CD4-positive, alpha-beta memory T cell (primary cell): ENCODE measurements at regions of chr11 and their contacts with region 1.

Region 1: DNA sequence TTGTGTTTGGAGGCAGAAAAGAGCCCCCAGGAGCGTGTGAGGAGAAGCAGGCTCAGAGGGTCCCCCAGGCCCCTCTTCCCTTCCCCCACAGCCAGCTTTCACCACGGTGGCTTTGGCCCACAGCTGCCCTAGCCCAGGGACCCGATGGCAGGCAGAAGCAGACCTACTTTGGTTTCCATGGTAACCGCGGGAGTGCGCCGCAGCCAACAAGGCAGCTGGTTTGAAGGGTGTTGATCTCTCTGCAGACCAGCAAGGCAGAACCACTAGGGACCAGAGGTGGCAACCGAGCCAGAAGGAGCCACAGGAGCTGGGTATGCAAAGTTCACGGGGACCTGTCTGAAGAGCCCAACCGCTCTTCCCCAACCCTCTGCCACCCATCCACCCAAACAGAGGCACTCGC is 69.4 kb downstream of the BUD13 start:
- DNase-seq: peak in 1 of 5 donors; percentile 7
- H3K4me3 ChIP-seq: no peak overlapping the region
- H3K4me3 Mint-ChIP-seq: no peak overlapping the region
- H3K27ac ChIP-seq: no peak overlapping the region
- H3K27ac Mint-ChIP-seq: no peak overlapping the region
- H3K4me1 ChIP-seq: no peaks in the 10 kb centered on the region
- H3K4me1 Mint-ChIP-seq: peaks cover 0 to 3% (median under 1%) of the 10 kb centered on the region in 4 donors
- H3K27me3 ChIP-seq: no peaks in the 10 kb centered on the region
- H3K27me3 Mint-ChIP-seq: peaks cover 4 to 9% of the 10 kb centered on the region in 2 donors

Region 2: DNA sequence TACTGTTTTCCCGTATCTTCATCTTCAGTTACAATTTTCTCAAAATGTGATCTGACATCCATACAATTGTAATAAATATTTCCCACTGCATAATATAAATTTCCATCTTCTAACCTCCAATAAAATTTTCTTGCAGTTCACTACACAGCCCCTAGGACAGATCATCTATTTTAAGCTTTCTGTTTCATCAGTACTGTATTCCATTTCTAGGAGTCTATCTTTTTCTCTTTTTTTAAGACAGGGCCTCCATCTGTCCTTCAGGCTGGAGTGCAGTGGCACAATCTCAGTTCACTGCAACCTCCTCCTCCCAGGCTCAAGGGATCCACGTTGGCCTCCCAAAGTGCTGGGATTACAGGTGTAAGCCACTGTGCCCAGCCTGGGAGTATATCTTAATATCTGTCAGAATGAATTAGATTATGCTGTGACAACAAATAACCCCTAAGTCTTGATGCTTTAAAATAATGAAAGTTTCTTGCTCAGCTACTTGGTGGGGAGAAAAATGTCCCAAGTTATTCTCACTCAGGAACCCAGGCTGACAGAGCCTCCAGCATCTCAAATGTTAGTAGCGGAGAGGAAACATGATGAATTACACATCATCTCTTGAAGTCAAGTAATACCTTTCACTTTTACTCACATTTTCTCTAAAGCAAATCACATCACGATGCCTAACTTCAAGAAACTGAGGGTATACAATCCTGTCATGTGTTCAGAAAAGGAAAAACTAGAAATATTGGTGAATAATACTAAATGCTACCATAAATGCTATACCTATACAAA is 22.9 kb before region 1 on chr11:
- CTCF ChIA-PET with region 1: no interaction called
- POLR2A ChIA-PET with region 1: no interaction called
- intact Hi-C with region 1: no loop called
- DNase-seq: no peak
- H3K4me3 ChIP-seq: no peak overlapping the region
- H3K4me3 Mint-ChIP-seq: no peak overlapping the region
- H3K27ac ChIP-seq: no peak overlapping the region
- H3K27ac Mint-ChIP-seq: no peak overlapping the region
- H3K4me1 ChIP-seq: no peaks in the 10 kb centered on the region
- H3K4me1 Mint-ChIP-seq: no peaks in the 10 kb centered on the region
- H3K27me3 ChIP-seq: no peaks in the 10 kb centered on the region
- H3K27me3 Mint-ChIP-seq: peaks cover 8 to 19% of the 10 kb centered on the region in 2 donors

Region 3: GRCh38 chr11:116691771-116692177 is 11.6 kb before region 1 on chr11:
- CTCF ChIA-PET with region 1: interaction called, 10 read pairs
- POLR2A ChIA-PET with region 1: no interaction called
- intact Hi-C with region 1: no loop called
- DNase-seq: peak; percentile 27 to 47 (median 33)
- H3K4me3 ChIP-seq: no peak overlapping the region
- H3K4me3 Mint-ChIP-seq: no peak overlapping the region
- H3K27ac ChIP-seq: no peak overlapping the region
- H3K27ac Mint-ChIP-seq: no peak overlapping the region
- H3K4me1 ChIP-seq: no peaks in the 10 kb centered on the region
- H3K4me1 Mint-ChIP-seq: no peaks in the 10 kb centered on the region
- H3K27me3 ChIP-seq: no peaks in the 10 kb centered on the region
- H3K27me3 Mint-ChIP-seq: peaks cover 4 to 7% of the 10 kb centered on the region in 2 donors

Region 4: DNA sequence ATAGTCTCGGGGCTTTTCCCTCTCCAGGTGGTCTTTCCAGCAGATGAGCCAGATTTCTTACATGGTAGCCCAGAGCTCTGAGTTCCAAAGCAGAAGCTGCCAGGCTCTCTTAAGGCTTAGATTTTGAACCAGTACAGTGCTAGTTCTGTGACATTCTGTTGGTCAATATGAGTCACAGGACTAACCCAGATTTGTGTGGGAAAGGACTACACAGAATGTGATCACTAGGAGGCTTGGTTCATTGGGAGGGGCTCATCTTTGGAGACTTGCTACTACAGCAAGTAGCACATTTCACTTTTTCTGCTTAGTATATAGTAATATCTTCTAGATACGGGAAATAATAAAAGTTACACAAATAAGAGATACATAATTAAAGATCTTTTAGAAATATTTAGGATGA is 553.2 kb after region 1 on chr11:
- CTCF ChIA-PET with region 1: no interaction called
- POLR2A ChIA-PET with region 1: no interaction called
- intact Hi-C with region 1: no loop called
- DNase-seq: no peak
- H3K4me3 ChIP-seq: no peak overlapping the region
- H3K4me3 Mint-ChIP-seq: no peak overlapping the region
- H3K27ac ChIP-seq: no peak overlapping the region
- H3K27ac Mint-ChIP-seq: no peak overlapping the region
- H3K4me1 ChIP-seq: no peaks in the 10 kb centered on the region
- H3K4me1 Mint-ChIP-seq: peaks cover 0 to 4% (median 2%) of the 10 kb centered on the region in 4 donors
- H3K27me3 ChIP-seq: no peaks in the 10 kb centered on the region
- H3K27me3 Mint-ChIP-seq: no peaks in the 10 kb centered on the region